Right cardiac atrium (tissue), 5 donors: ENCODE measurements at regions of chr19 and their contacts with region 1.

Region 1: DNA sequence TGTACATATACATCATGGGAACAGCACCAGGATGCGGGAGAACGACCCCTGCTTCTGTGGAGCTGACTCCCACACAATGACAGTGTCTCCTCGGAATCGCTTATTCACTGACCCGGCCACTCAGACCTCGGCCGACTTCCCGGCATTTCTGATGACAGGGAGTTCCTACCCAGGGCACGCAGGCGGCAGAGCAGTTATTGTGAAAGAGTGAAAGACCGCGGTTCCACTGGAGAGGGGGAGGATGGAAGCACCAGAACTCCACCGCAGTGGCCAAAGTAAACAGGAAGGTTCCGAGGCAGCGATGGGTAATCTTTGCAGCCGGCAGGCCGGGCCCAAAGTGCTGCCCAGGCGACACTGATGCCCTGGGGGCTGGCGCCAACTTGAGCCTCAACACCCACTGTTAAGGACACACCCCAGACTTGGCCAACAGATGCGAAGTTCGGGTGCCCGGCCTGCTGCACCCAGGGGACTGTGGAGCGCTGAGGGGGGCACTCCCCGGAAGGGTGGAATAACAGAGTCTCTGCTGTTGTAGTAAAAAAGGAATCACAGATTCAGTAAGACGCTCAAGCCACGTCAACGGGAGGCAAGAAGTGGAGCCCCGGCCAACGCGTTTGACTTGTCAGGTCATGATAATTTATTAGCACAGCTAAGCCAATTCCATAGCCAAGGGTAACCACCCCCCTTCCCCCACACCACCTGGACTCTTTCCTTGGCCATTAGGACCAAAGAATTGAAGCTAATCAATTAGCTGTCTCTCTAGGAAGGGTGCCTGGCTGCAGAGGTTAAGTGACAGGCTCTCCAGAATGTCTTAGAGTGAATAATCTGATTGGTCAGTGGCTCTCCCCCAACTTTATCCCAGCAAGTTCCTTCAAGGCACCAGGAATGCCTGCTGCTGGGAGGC is 5.8 kb downstream of the MLLT1 start:
- DNase-seq: peak; percentile 91 to 95 (median 94)
- ATAC-seq: peak; percentile 82 to 85
- H3K4me3 ChIP-seq: no peak overlapping the region
- H3K27ac ChIP-seq: peak overlapping the region; percentile 95
- H3K4me1 ChIP-seq: peaks cover 65% of the 10 kb centered on the region
- H3K27me3 ChIP-seq: no peaks in the 10 kb centered on the region

Region 2: GRCh38 chr19:6238643-6239281 is 35.2 kb before region 1 on chr19:
- intact Hi-C with region 1: loop called in 3 of 4 experiments (anchors 5 kb)
- DNase-seq: peak; percentile 81 to 93 (median 93)
- ATAC-seq: peak; percentile 58 to 60
- H3K4me3 ChIP-seq: no peak overlapping the region
- H3K27ac ChIP-seq: peak overlapping the region; percentile 86
- H3K4me1 ChIP-seq: peaks cover 50% of the 10 kb centered on the region
- H3K27me3 ChIP-seq: no peaks in the 10 kb centered on the region